Activated T-helper 2 cell treated with anti-CD3 and anti-CD28 coated beads, Interferon-gamma antibody, Interleukin-2, Interleukin-4, amounts not matched to agents 10 μg/mL and 5 μg/mL and 100 μg/mL, durations not matched to agents 14 hours and 24 hours and 36 hours (primary cell): ENCODE measurements at regions of chr20 and their contacts with region 1.

Region 1: DNA sequence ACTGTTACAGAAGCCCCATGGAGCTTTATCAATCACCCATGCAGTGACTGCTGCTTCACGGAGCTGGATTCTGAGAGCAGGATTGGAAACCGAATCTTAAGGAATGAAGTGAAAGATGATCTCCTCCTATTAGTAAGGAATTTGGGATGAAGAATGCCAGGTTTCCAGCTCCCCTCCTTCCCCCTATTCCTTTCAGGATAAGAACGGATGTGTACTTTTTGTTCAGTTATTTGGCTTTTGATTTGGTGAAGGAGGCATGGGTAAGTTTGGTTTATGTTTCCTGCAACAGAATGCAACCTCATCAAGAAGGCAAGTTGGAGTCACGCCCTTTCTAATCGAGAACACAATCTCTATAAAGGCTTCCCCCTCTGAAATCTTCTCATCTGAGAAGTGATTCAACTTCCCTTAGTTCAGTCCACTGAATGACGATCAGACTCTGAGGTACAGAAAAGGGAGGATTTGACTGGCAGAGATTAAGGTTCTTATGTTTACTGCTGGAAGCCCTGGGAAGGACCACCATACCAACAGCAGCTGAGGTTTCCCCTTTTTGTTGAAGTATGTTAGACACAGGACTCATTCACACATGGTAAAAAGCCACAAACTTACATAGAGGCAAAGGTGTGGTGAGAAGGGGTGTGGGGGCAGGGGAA is 5.5 kb downstream of the ELMO2 start:
- DNase-seq: peak; percentile 29
- H3K4me3 Mint-ChIP-seq: peak overlapping the region; percentile 73
- H3K27ac Mint-ChIP-seq: peak overlapping the region; percentile 84
- H3K4me1 Mint-ChIP-seq: peaks cover 56% of the 10 kb centered on the region
- H3K27me3 Mint-ChIP-seq: no peaks in the 10 kb centered on the region

Region 2: GRCh38 chr20:46051556-46052308 is 349.2 kb before region 1 on chr20:
- intact Hi-C with region 1: no loop called
- DNase-seq: no peak
- H3K4me3 Mint-ChIP-seq: no peak overlapping the region
- H3K27ac Mint-ChIP-seq: no peak overlapping the region
- H3K4me1 Mint-ChIP-seq: peaks cover 6% of the 10 kb centered on the region
- H3K27me3 Mint-ChIP-seq: peaks cover 21% of the 10 kb centered on the region

Region 3: GRCh38 chr20:46324960-46325703 is 75.8 kb before region 1 on chr20:
- intact Hi-C with region 1: no loop called
- DNase-seq: no peak
- H3K4me3 Mint-ChIP-seq: no peak overlapping the region
- H3K27ac Mint-ChIP-seq: no peak overlapping the region
- H3K4me1 Mint-ChIP-seq: no peaks in the 10 kb centered on the region
- H3K27me3 Mint-ChIP-seq: peaks cover 9% of the 10 kb centered on the region

Region 4: DNA sequence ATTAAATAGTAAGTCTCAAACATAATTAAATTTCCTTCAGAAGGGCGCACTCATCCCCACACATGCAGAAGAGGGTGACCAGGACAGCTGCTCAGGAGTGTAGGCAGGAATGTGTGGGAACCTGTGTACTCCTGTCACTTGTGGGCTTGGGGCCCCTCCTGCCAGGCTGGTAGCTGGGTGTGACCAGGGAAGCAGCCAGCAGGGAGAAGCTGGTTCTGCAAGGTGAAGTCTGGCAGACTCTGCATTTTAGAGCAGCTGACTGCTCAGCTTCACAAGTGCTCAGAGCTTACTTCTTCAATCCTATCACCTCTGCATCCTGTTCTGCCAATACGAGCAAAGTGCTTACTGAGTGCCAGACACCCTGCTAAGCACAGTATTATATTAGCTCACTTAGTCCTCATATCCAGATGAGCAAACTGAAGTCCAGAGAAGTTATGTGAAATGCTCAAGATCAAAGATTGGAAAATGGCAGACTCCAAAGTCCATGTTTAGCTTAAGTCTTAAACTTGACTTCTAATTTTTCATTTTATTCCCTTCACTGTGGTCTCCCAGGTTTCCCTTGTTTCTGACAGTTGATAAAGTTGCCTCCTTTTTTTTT is 22.4 kb before region 1 on chr20:
- intact Hi-C with region 1: no loop called
- DNase-seq: no peak
- H3K4me3 Mint-ChIP-seq: no peak overlapping the region
- H3K27ac Mint-ChIP-seq: no peak overlapping the region
- H3K4me1 Mint-ChIP-seq: no peaks in the 10 kb centered on the region
- H3K27me3 Mint-ChIP-seq: no peaks in the 10 kb centered on the region

Region 5: GRCh38 chr20:46689082-46689754 is 288.3 kb after region 1 on chr20 and contains the start of gene TP53RK:
- intact Hi-C with region 1: loop called (anchors 5 kb)
- DNase-seq: peak; percentile 95
- H3K4me3 Mint-ChIP-seq: peak within 1 kb of the TSS; percentile 88
- H3K27ac Mint-ChIP-seq: peak within 1 kb of the TSS; percentile 83
- H3K4me1 Mint-ChIP-seq: peaks cover 33% of the 10 kb centered on the region
- H3K27me3 Mint-ChIP-seq: no peaks in the 10 kb centered on the region
- total RNA-seq, gene TP53RK: 14.4 and 14.7 TPM in 2 replicates